ENCODE measurements at regions of chr7 and their contacts with region 1.

Region 1: GRCh38 chr7:157138424-157139110 is at the start of gene UBE3C:
- DNase-seq: peak; percentile 90 to 95
- ATAC-seq: peak; percentile 88
- total RNA-seq, gene UBE3C: 54.4 to 71.8 TPM

Region 2: DNA sequence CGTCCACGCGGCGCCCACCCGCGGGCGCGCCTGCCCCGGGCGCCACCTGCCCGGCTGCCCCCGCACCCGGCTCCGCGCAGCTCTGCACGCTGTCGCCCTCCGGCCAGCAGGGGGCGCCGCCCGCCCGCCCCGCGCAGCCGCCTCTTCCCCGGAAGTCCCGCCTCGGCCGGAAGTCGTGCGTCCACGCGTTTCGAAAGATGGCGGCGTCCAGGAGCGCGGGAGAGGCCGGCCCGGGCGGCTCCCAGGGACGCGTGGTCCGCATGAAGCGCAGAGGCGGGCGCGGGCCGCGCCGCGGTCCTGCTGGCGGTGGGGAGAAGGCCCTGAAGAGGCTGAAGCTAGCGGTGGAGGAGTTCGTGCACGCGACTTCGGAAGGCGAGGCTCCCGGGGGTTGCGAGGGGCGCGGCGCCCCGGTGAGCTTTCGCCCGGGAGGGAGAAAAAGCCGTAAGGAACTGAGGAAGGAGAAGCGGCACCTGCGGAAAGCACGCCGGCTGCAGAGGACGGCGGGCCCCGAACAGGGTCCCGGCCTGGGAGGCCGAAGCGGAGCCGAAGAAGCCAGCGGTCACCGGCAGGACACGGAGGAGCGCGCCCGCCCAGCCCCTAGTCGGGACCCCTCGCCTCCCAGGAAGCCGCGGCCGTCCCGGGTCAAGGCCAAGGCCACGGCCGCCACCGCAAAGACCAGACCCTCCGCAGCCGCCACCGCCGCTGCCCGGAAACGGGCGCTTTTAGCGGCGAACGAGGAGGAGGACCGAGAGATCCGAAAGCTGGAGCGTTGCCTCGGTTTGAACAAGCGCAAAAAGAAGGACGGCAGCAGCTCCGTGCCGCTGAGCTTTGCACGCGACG is 188.8 kb before region 1 on chr7 and contains the start of gene NOM1:
- intact Hi-C with region 1: loop called in 1 of 2 experiments (anchors 5 kb)
- DNase-seq: peak; percentile 81 to 95
- ATAC-seq: peak; percentile 92
- total RNA-seq, gene NOM1: 13.3 to 16.1 TPM